PC-9 (cell line): ENCODE measurements at regions of chr6 and their contacts with region 1.

Region 1: GRCh38 chr6:144362042-144363018 is 77.2 kb downstream of the UTRN start:
- DNase-seq: peak; percentile 79 to 88
- H3K4me3 ChIP-seq: no peak overlapping the region
- H3K27ac ChIP-seq: peak overlapping the region; percentile 90
- H3K4me1 ChIP-seq: peaks cover 49% of the 10 kb centered on the region
- H3K27me3 ChIP-seq: no peaks in the 10 kb centered on the region
- CTCF ChIP-seq: no peak

Region 2: DNA sequence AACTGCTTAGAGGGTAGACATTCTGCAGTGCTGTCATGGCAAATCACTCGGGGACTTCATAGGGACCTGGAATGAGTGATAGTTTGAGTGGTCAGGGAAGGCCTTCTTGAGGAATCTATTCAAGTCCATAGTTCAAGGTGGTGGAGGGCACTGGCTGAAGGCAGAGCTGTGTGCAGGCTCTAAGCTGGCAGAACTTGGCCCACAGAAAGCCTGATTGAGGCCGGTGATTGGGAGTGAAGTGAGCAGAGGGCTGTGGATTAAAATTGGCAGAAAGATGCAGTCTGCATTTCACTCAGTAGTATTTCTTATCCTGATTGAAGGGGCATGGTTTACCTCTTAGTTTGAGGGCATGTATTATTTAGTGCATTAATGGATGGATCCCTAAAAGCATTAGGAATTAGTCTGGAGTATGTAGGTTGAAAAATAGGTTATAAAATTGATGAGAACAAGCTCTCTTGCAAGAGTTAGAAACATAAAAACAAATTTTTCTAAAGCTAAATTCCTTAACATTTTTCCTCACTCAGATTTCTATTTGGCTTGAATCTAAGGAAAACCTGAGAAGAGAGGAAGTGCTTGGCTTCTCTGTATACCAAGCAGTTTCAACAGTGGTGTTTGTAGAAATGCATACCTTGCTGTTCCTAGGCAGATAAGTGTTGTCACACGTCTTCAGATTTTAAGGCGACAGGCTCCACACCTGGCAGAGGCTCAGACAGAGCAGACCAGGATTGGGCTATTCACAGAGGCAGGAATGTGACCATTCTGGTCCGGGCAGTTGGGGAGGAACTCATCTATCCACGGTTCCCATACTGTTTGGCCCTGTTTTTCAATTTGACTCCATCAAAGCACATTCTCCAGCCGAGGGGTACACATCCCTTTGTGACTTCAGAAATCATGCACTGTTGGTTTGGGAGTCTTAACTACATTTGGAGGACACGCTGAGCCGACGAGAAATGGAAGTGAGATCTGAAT is 32.0 kb before region 1 on chr6:
- CTCF ChIA-PET with region 1: no interaction called
- POLR2A ChIA-PET with region 1: interaction called, 5 read pairs
- intact Hi-C with region 1: loop called (anchors 1 kb)
- DNase-seq: peak; percentile 91 to 97
- H3K4me3 ChIP-seq: peak overlapping the region; percentile 68
- H3K27ac ChIP-seq: peak overlapping the region; percentile 78
- H3K4me1 ChIP-seq: peaks cover 35% of the 10 kb centered on the region
- H3K27me3 ChIP-seq: no peaks in the 10 kb centered on the region
- CTCF ChIP-seq: no peak

Region 3: GRCh38 chr6:144349690-144350527 is 12.4 kb before region 1 on chr6:
- CTCF ChIA-PET with region 1: no interaction called
- POLR2A ChIA-PET with region 1: no interaction called
- intact Hi-C with region 1: loop called (anchors 1 kb)
- DNase-seq: peak in 1 of 2 experiments; percentile 77
- H3K4me3 ChIP-seq: no peak overlapping the region
- H3K27ac ChIP-seq: peak overlapping the region; percentile 72
- H3K4me1 ChIP-seq: peaks cover 36% of the 10 kb centered on the region
- H3K27me3 ChIP-seq: no peaks in the 10 kb centered on the region
- CTCF ChIP-seq: no peak

Region 4: DNA sequence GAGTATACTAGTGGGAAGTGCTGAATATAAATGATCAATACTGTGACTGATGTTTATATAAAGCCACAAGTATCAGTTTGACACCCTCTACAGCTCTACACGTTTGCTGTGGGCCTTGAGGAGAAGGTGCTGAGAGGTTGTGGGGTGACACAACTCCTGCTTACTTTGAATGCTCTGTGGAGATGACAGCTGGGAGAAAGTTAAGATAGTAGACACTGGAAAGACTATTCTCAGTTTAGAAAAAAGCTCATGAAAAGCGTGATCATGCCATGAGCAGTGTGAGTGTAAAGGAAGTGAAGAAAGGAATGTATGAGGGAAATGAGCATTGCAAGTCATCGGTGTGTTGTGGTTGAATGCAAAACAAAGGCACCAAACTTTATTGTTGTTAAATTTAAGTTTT is 138.6 kb after region 1 on chr6:
- CTCF ChIA-PET with region 1: no interaction called
- POLR2A ChIA-PET with region 1: no interaction called
- intact Hi-C with region 1: no loop called
- DNase-seq: no peak
- H3K4me3 ChIP-seq: no peak overlapping the region
- H3K27ac ChIP-seq: no peak overlapping the region
- H3K4me1 ChIP-seq: no peaks in the 10 kb centered on the region
- H3K27me3 ChIP-seq: no peaks in the 10 kb centered on the region
- CTCF ChIP-seq: no peak